ENCODE measurements at regions of chr16 and their contacts with region 1.

Region 1: GRCh38 chr16:75372236-75372856 is 61.0 kb downstream of the CFDP1 start:
- DNase-seq: no peak
- H3K4me3 Mint-ChIP-seq: no peak overlapping the region
- H3K27ac Mint-ChIP-seq: peak overlapping the region; percentile 9
- H3K4me1 Mint-ChIP-seq: peaks cover 16% of the 10 kb centered on the region
- H3K27me3 Mint-ChIP-seq: no peaks in the 10 kb centered on the region
- CTCF ChIP-seq: no peak

Region 2: DNA sequence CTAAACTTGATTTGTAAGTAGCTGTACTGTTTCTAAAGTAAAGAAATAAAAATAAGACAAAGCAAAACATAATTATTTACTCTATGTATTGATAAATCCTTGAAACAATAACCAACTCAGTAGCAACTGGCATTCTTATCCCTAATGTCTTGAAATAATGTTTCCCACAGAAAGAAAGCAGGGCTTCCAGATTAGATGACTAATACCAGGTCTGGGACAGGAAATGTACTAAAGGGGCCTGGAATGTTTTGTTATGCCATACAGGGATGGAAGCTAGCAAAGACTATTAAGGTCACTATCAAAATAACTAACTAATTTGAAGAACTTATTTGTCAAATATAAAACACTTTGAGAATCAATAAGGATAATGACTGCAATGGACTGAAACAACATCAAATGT is 21.2 kb before region 1 on chr16:
- CTCF ChIA-PET with region 1: no interaction called
- POLR2A ChIA-PET with region 1: interaction called, 13 read pairs
- intact Hi-C with region 1: no loop called
- DNase-seq: peak; percentile 69
- H3K4me3 Mint-ChIP-seq: no peak overlapping the region
- H3K27ac Mint-ChIP-seq: peak overlapping the region; percentile 73
- H3K4me1 Mint-ChIP-seq: peaks cover 12% of the 10 kb centered on the region
- H3K27me3 Mint-ChIP-seq: no peaks in the 10 kb centered on the region
- CTCF ChIP-seq: no peak

Region 3: GRCh38 chr16:75622761-75623605 is 250.6 kb after region 1 on chr16 and contains the start of gene ADAT1:
- CTCF ChIA-PET with region 1: no interaction called
- POLR2A ChIA-PET with region 1: no interaction called
- intact Hi-C with region 1: no loop called
- DNase-seq: peak; percentile 98
- H3K4me3 Mint-ChIP-seq: peak within 1 kb of the TSS; percentile 84
- H3K27ac Mint-ChIP-seq: peak within 1 kb of the TSS; percentile 72
- H3K4me1 Mint-ChIP-seq: peaks cover 25% of the 10 kb centered on the region
- H3K27me3 Mint-ChIP-seq: no peaks in the 10 kb centered on the region
- CTCF ChIP-seq: no peak
- total RNA-seq, gene ADAT1: 48.7 and 60.2 TPM in 2 replicates

Measured in MCF 10A (cell line).